ENCODE measurements at regions of chr6 and their contacts with region 1.

Region 1: GRCh38 chr6:40536442-40536841 is 50.7 kb downstream of the LRFN2 start:
- DNase-seq: peak in 1 of 2 experiments; percentile 38
- H3K4me3 ChIP-seq: no peak overlapping the region
- H3K27ac ChIP-seq: no peak overlapping the region
- H3K4me1 ChIP-seq: peaks cover 0 to 8% (median 5%) of the 10 kb centered on the region in 4 experiments; a peak in 5 of 7 replicates
- H3K27me3 ChIP-seq: no peaks in the 10 kb centered on the region
- CTCF ChIP-seq: peak; percentile 70 to 73 (median 70)
- EP300 ChIP-seq: no peak
- POLR2A ChIP-seq: no peak
- RAD21 ChIP-seq: peak; percentile 47 to 69

Region 2: DNA sequence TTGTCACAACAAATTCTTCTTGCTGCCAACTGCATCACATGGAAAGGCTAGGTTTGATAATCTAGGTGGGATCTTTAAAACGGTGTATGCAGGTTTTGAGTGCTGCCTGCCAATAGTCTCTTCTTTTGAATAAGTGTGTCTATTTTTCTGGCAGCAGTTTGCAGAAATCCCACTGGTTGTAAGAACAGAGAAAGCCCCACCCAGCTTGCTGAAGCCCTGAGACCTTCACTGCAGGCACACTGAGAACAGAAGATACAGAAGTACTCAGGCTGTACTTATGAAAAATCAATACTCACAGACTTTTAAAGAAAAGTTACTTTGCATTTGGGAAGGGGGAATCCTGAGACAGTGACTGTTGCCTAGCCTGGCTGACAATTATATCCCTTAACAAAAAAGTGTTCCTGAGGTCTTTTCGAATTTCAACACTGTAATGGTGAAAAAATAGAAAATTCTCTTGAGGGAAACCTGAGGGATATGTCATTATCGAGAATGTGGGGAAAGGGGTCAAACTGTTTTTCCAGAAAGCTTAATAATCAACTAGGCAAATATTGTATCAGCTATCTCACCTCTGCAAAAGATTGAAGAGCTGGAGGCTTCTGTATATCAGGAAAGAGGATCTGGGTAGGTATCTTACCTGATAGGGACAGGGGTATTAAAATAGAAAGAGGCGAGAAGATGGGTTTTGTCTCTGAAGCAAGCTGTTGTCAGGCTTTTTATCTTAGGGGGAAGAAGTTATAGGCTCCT is 149.1 kb before region 1 on chr6:
- CTCF ChIA-PET with region 1: no interaction called
- POLR2A ChIA-PET with region 1: no interaction called
- DNase-seq: no peak
- H3K4me3 ChIP-seq: no peak overlapping the region
- H3K27ac ChIP-seq: no peak overlapping the region
- H3K4me1 ChIP-seq: no peaks in the 10 kb centered on the region; a peak in 1 of 7 replicates
- H3K27me3 ChIP-seq: no peaks in the 10 kb centered on the region; a peak in 1 of 7 replicates
- CTCF ChIP-seq: no peak
- EP300 ChIP-seq: no peak
- POLR2A ChIP-seq: no peak
- RAD21 ChIP-seq: no peak

Region 3: GRCh38 chr6:40520678-40521077 is 15.8 kb before region 1 on chr6:
- CTCF ChIA-PET with region 1: interaction called, 40 read pairs
- POLR2A ChIA-PET with region 1: no interaction called
- DNase-seq: no peak
- H3K4me3 ChIP-seq: no peak overlapping the region
- H3K27ac ChIP-seq: no peak overlapping the region
- H3K4me1 ChIP-seq: peaks cover 10 to 29% (median 19%) of the 10 kb centered on the region in 4 experiments
- H3K27me3 ChIP-seq: no peaks in the 10 kb centered on the region
- CTCF ChIP-seq: no peak
- EP300 ChIP-seq: no peak
- POLR2A ChIP-seq: no peak
- RAD21 ChIP-seq: no peak

Region 4: GRCh38 chr6:40550202-40551101 is 14.0 kb after region 1 on chr6:
- CTCF ChIA-PET with region 1: interaction called, 100 read pairs
- POLR2A ChIA-PET with region 1: interaction called, 7 read pairs
- DNase-seq: no peak
- H3K4me3 ChIP-seq: no peak overlapping the region
- H3K27ac ChIP-seq: no peak overlapping the region
- H3K4me1 ChIP-seq: peaks cover 4 to 17% (median 7%) of the 10 kb centered on the region in 4 experiments
- H3K27me3 ChIP-seq: no peaks in the 10 kb centered on the region
- CTCF ChIP-seq: peak in 2 of 3 experiments; percentile 46 to 73; a peak in 3 of 4 replicates
- EP300 ChIP-seq: no peak
- POLR2A ChIP-seq: no peak
- RAD21 ChIP-seq: peak; percentile 24 to 45; a peak in 3 of 4 replicates

Region 5: DNA sequence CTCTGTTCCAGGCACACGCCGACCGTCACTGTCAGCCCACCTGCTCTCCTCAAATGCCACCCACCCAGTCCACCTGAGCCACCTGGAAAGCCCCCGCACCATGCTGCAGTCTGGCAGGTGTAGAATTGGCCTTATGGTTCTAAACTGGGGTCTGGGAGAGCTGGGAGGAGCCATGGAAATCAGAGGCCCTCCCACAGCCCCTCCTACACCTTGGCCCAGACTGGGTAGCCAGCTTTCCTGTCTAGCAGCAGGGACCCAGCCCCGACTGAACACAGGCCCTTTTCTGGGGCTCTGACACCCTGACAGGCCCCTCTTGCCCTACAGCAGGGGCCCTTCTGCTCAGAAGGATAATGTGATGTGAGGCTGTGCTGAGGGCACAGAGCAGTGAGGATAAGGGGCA is 19.6 kb after region 1 on chr6:
- CTCF ChIA-PET with region 1: interaction called, 100 read pairs
- POLR2A ChIA-PET with region 1: interaction called, 4 read pairs
- DNase-seq: no peak
- H3K4me3 ChIP-seq: no peak overlapping the region
- H3K27ac ChIP-seq: no peak overlapping the region
- H3K4me1 ChIP-seq: peaks cover 0 to 15% (median 7%) of the 10 kb centered on the region in 4 experiments; a peak in 5 of 7 replicates
- H3K27me3 ChIP-seq: no peaks in the 10 kb centered on the region
- CTCF ChIP-seq: no peak
- EP300 ChIP-seq: no peak
- POLR2A ChIP-seq: no peak
- RAD21 ChIP-seq: no peak

Region 6: GRCh38 chr6:40563111-40563510 is 26.7 kb after region 1 on chr6:
- CTCF ChIA-PET with region 1: interaction called, 11 read pairs
- POLR2A ChIA-PET with region 1: interaction called, 4 read pairs
- DNase-seq: no peak
- H3K4me3 ChIP-seq: no peak overlapping the region
- H3K27ac ChIP-seq: no peak overlapping the region
- H3K4me1 ChIP-seq: peaks cover 4 to 14% (median 7%) of the 10 kb centered on the region in 4 experiments
- H3K27me3 ChIP-seq: no peaks in the 10 kb centered on the region
- CTCF ChIP-seq: peak in 1 of 3 experiments; percentile 7; a peak in 1 of 4 replicates
- EP300 ChIP-seq: no peak
- POLR2A ChIP-seq: no peak
- RAD21 ChIP-seq: peak; percentile 0 to 23; a peak in 2 of 4 replicates

Region 7: DNA sequence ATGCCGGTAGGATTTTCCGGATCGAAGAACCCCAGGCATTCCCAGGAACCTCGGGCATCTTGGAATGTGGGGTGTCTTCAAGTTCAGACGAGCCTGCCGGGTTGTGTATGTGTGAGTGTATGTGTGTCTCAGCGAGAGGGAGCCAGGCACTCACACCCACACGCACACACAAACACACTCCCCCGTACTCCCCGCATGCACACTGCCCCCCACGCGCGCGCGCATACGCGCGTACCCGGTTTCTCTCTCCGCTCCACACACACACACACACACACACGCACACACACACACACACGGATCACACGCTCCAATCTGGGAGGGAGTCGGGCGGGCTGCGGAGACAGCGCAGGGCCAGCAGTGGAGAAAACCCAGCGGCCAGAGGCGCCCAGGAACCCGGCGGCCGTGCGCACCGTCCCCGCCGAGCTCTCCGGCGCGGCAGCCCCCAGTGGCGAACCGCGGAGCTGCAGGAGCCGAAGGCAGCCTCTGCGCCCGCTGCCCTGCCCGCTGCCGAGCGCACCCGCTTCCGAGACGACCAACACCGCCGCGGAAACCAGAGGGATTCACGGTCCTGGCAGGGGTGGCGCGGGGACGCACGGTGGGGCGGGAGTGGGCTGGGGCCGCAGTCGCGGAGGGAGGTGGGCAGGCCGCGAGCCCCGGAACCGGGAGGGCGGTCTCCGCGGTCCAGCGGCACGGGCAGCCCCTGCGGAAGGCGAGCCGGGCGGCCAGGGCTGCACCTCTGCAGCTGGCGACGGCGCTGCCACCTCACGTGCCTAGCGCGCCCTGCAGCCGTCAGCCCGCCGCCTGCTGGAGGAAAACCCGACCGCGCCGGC is 51.0 kb after region 1 on chr6 and contains the start of gene LRFN2:
- CTCF ChIA-PET with region 1: interaction called, 15 read pairs
- POLR2A ChIA-PET with region 1: interaction called, 3 read pairs
- DNase-seq: peak in 1 of 2 experiments; percentile 93
- H3K4me3 ChIP-seq: peak within 1 kb of the TSS; percentile 56 to 76 (median 72)
- H3K27ac ChIP-seq: no peak within 1 kb of the TSS
- H3K4me1 ChIP-seq: peaks cover 13 to 24% (median 19%) of the 10 kb centered on the region in 4 experiments
- H3K27me3 ChIP-seq: peaks cover 3 to 23% (median 19%) of the 10 kb centered on the region in 4 experiments; a peak in 6 of 7 replicates
- CTCF ChIP-seq: peak; percentile 70 to 91 (median 89)
- EP300 ChIP-seq: no peak
- POLR2A ChIP-seq: peak in 1 of 2 experiments; percentile 47; a peak in 1 of 3 replicates
- RAD21 ChIP-seq: peak; percentile 64 to 73
- total RNA-seq, gene LRFN2: 2.3 TPM in 2 replicates